Activated naive CD4-positive, alpha-beta T cell treated with anti-CD3 and anti-CD28 coated beads for 36 hours (primary cell): ENCODE measurements at regions of chr6 and their contacts with region 1.

Region 1: DNA sequence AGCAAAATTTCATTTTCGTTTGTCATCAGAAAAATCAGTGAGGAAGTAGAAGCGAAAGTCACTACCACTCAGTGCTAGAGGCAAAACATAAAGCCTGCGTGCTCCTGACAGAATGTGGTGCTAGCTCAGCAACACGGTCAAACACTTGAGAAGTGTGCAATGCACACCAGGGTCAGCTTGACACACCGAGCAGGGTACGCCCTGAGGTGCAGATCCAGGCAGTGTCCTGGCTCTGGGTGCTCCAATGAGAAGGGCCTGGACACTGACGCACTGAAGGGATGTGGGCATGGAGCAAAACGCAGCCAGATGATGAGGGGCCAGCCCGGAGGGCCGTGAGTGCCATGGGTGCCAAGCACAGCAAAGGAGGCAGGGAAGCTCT is 5.9 kb downstream of the RNASET2 start:
- DNase-seq: peak; percentile 42
- H3K4me3 Mint-ChIP-seq: peak overlapping the region; percentile 62
- H3K27ac Mint-ChIP-seq: peak overlapping the region; percentile 96
- H3K4me1 Mint-ChIP-seq: peaks cover 67% of the 10 kb centered on the region
- H3K27me3 Mint-ChIP-seq: no peaks in the 10 kb centered on the region

Region 2: DNA sequence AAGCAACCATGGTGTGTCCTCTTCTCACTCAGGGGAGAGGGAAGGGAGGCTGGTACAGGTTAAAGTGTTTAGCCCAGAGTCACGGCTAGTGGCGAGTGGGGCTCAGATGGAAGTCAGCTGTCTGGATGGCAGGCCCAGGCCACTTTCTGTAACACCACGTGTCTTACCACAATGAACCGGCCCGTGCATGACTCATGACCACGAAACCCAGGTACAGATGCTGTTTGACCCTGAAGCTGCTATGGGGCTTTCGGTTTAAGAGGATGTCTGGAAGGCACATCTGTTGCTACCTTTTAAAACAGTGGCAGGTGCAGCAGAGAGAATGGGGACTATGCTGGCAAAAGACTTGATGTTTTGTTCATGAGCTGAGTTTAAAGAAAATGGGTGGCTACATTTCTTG is 531.1 kb before region 1 on chr6:
- CTCF ChIA-PET with region 1: no interaction called
- intact Hi-C with region 1: loop called (anchors 5 kb)
- DNase-seq: peak; percentile 74
- H3K4me3 Mint-ChIP-seq: no peak overlapping the region
- H3K27ac Mint-ChIP-seq: peak overlapping the region; percentile 60
- H3K4me1 Mint-ChIP-seq: peaks cover 60% of the 10 kb centered on the region
- H3K27me3 Mint-ChIP-seq: no peaks in the 10 kb centered on the region

Region 3: DNA sequence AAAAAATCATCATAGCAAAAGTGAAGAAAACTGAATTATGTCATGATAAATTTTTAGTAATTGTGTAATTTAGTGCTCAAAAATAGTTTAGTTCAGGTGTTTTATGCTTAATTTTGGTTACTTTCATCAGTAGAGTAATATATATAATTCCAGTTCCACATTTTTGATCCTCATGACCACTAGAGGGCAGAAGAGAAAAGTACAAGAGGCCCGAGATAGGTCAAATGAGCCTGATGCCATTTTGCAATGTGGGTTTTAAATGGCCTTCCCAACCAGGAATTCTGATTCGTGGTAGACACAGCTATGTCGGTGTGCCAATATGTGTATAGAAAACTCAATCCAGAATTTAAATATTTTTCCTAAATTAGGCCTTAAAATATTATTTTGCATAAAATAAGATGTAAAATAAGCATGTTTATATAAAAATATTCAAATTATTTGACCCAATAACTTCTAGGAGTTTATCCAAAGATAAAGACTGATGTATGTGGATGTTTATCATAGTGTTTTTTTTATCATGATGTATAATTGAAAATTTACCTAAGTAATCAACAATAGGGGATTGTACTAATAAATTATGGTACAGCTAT is 163.6 kb before region 1 on chr6:
- CTCF ChIA-PET with region 1: interaction called, 11 read pairs
- intact Hi-C with region 1: loop called (anchors 1 kb)
- DNase-seq: peak; percentile 24
- H3K4me3 Mint-ChIP-seq: no peak overlapping the region
- H3K27ac Mint-ChIP-seq: no peak overlapping the region
- H3K4me1 Mint-ChIP-seq: no peaks in the 10 kb centered on the region
- H3K27me3 Mint-ChIP-seq: no peaks in the 10 kb centered on the region

Region 4: GRCh38 chr6:166862287-166862977 is 88.0 kb before region 1 on chr6:
- CTCF ChIA-PET with region 1: interaction called, 3 read pairs
- intact Hi-C with region 1: loop called (anchors 2 kb)
- DNase-seq: peak; percentile 51
- H3K4me3 Mint-ChIP-seq: peak overlapping the region; percentile 79
- H3K27ac Mint-ChIP-seq: no peak overlapping the region
- H3K4me1 Mint-ChIP-seq: peaks cover 7% of the 10 kb centered on the region
- H3K27me3 Mint-ChIP-seq: no peaks in the 10 kb centered on the region

Region 5: DNA sequence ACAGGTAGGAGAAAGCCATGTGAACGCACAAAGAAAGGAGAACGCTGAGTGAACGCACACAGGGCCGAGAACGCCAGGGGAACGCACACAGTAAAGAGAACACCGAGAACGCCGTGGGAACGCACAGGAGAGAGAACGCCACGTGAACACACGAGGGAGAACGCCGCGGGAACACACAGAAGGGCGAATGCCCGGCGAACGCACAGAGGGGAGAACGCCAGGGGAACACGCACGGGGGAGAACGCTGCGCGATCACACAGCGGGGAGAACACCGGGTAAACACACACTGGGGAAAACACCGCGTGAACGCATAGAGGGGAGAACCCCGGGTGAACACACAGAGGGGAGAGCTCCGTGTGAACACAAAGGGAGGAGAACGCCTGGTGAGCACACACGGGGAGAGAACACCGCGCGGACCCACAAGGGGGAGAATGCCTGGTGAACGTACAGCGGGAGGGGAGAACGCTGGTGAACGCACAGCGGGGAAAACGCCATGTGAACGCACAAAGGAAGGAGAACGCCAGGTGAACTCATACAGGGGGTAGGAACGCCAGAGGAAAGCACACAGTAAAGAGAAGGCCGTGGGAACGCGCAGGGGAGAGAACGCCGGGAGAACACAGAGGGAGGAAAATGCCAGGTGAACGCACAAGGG is 49.4 kb before region 1 on chr6:
- CTCF ChIA-PET with region 1: no interaction called
- intact Hi-C with region 1: no loop called
- DNase-seq: no peak
- H3K4me3 Mint-ChIP-seq: no peak overlapping the region
- H3K27ac Mint-ChIP-seq: no peak overlapping the region
- H3K4me1 Mint-ChIP-seq: no peaks in the 10 kb centered on the region
- H3K27me3 Mint-ChIP-seq: no peaks in the 10 kb centered on the region

Region 6: GRCh38 chr6:166999145-166999883 is 48.9 kb after region 1 on chr6 and contains the start of gene CEP43:
- CTCF ChIA-PET with region 1: interaction called, 3 read pairs
- intact Hi-C with region 1: loop called (anchors 1 kb)
- DNase-seq: peak; percentile 82
- H3K4me3 Mint-ChIP-seq: peak within 1 kb of the TSS; percentile 86
- H3K27ac Mint-ChIP-seq: peak within 1 kb of the TSS; percentile 74
- H3K4me1 Mint-ChIP-seq: peaks cover 26% of the 10 kb centered on the region
- H3K27me3 Mint-ChIP-seq: no peaks in the 10 kb centered on the region
- total RNA-seq, gene CEP43: 19.6 to 20.3 TPM

Region 7: DNA sequence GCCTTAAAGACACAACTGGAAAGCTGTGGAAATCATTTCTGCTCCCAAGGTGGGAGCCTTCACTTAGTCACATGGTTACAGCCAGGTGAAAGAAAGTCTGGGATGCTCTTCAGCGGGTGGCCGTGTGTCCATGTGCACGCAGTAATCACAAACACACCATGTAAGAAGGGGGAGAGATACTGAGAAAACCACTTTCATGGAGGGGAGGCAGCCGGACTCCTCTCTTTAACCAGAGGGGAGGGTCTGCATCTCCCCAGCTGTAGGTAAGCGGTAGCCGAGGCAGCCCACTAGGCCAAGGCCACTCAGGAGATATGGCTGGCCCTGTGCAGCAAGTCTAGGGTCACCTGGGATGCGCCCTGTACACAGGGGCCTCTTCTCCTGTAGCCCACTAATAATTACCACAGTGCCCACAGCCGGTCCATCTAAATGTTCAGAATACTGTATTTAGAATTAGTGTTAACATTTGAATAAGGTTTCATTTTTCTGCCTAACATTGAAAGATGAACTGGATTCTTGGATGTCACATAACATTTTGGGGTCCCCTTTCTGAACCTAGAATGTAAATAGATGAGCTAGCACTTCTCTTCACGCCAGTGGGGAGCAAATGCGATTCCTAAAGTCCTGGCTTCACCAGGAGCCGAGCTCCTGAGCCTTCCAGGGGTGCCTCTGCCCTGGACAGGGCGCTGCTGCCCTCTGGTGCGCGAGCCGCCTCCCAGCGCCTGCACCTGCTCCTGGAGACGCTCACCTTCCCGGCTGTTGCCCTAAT is 191.4 kb after region 1 on chr6:
- CTCF ChIA-PET with region 1: no interaction called
- intact Hi-C with region 1: loop called (anchors 1 kb)
- DNase-seq: peak; percentile 62
- H3K4me3 Mint-ChIP-seq: no peak overlapping the region
- H3K27ac Mint-ChIP-seq: no peak overlapping the region
- H3K4me1 Mint-ChIP-seq: peaks cover 2% of the 10 kb centered on the region
- H3K27me3 Mint-ChIP-seq: peaks cover 4% of the 10 kb centered on the region